GM13977 (cell line): ENCODE measurements at regions of chr14 and their contacts with region 1.

Region 1: GRCh38 chr14:96297000-96297399 is 41.0 kb downstream of the BDKRB1 start:
- DNase-seq: no peak
- CTCF ChIP-seq: peak; percentile 36

Region 2: DNA sequence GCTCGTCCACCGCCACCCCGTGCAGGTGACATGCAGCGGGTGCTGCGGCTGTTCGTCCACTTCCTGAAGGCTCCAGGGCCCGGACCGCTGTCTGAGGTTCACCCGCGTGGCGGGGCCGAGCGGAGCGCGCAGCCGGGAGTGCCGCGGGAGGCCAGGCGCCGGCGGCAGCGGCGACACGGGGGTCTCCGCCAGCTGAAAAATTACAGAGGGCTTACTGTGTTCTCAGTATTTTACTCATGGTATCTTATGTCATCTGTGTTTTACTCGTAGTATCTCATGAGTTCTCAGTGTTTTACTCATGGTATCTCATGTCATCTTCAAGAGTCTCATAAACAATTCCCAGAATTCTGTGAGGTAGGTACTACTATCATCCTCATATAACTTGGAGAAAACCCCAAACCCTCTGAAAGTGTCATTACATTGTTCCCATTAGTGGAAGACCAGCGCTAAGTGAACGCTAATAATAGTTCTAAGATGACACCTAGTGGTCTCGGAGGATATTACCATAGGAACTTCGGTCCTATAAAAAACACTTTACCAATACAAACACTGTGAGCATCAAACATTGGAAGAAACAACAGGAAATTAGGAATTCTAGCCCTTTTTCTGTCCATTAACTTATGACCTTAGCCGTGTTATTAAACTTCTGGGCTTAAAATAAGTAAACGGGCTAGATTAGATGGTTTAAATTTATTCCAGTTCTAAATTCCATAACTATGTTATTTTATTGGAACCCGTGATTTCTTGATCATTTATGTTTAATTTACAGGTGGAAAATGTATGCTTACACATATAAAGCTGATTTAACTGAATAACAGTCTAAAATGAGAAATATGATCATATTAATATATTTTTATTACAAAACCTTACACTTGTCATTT is 127.3 kb after region 1 on chr14:
- in situ Hi-C with region 1: loop called (anchors 10 kb)
- DNase-seq: peak; percentile 77
- CTCF ChIP-seq: peak; percentile 65

Region 3: GRCh38 chr14:96658611-96659010 is 361.6 kb after region 1 on chr14:
- in situ Hi-C with region 1: no loop called
- DNase-seq: no peak
- CTCF ChIP-seq: no peak